PC-9 (cell line): ENCODE measurements at regions of chr15 and their contacts with region 1.

Region 1: DNA sequence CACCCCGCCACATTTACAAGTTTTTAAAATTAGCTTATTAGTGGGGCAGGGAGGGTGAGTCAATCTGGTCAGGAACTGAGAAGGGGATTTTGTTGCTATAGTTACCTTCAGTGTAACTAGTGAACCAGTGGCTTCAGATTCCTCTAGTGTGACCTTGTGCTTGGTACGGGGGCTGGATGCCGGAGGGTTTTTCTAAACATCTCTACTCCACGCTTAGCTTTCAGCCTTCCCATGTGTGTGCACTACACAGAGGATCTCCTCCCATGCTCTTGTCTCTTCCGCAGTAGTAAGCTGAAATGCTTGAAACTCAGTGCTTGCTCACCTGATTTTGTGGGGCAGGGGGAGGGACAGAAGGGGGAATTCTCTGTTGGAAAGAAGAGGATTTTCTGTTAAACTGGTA is 67.9 kb upstream of the AKAP13 start:
- DNase-seq: no peak
- H3K4me3 ChIP-seq: no peak overlapping the region
- H3K27ac ChIP-seq: no peak overlapping the region
- H3K4me1 ChIP-seq: peaks cover 10% of the 10 kb centered on the region
- H3K27me3 ChIP-seq: no peaks in the 10 kb centered on the region
- CTCF ChIP-seq: no peak

Region 2: DNA sequence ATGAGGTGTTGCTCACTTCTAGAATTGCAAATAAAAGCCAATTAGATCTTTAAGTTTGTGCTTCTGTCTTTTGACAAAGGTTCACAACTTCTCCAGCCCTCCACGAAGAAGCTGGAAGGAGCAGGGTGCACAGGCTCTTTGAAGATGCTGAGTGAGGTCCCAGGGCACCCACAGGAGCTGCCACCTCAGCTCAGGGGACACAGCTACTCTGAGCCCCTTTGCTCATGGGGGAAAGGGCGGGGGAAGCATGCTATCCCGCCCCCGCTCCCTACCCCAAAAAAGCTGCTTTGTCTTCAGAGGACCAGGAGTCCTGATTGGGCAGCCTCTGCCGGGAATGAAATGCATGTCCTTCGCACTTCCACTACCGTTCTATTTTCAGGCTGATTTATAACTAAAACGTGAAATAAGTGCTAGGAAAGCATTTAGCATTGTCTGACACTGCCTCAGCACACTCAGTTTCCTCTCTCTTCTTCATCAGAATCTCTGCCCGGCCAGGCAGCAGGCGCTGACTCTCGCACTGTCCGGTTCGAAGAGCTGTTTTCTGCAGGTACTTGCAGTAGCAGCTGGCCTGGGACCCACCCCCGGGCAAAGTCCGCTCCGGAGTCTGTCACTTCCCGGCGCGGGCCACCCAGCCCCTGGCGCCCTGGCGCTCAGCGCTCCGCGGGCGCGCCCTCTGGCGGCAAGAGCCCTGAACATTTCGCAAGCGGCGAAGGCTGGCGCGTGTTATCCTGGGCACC is 527.7 kb after region 1 on chr15:
- CTCF ChIA-PET with region 1: no interaction called
- POLR2A ChIA-PET with region 1: no interaction called
- intact Hi-C with region 1: loop called (anchors 5 kb)
- DNase-seq: peak; percentile 62 to 86
- H3K4me3 ChIP-seq: peak overlapping the region; percentile 30; the same call in 1 of the 2 replicates
- H3K27ac ChIP-seq: no peak overlapping the region
- H3K4me1 ChIP-seq: peaks cover 12% of the 10 kb centered on the region
- H3K27me3 ChIP-seq: peaks cover 4% of the 10 kb centered on the region; the same call in 1 of the 2 replicates
- CTCF ChIP-seq: peak; percentile 92